B cell (primary cell): ENCODE measurements at regions of chr16 and their contacts with region 1.

Region 1: GRCh38 chr16:50245417-50246298 is 20.7 kb upstream of the ADCY7 start:
- DNase-seq: peak; percentile 57
- ATAC-seq: peak; percentile 94
- H3K4me3 ChIP-seq: peak overlapping the region in 4 of 5 experiments; percentile 60 to 69 (median 62)
- H3K4me3 Mint-ChIP-seq: peak overlapping the region; percentile 74
- H3K27ac ChIP-seq: no peak overlapping the region
- H3K27ac Mint-ChIP-seq: peak overlapping the region; percentile 50
- H3K4me1 ChIP-seq: peaks cover 6 to 15% of the 10 kb centered on the region in 2 donors
- H3K4me1 Mint-ChIP-seq: peaks cover 11% of the 10 kb centered on the region
- H3K27me3 ChIP-seq: peaks cover 0 to 11% (median 4%) of the 10 kb centered on the region in 4 experiments
- H3K27me3 Mint-ChIP-seq: no peaks in the 10 kb centered on the region
- CTCF ChIP-seq: peak; percentile 39

Region 2: GRCh38 chr16:50281964-50282538 is 36.4 kb after region 1 on chr16:
- CTCF ChIA-PET with region 1: interaction called, 10 read pairs
- POLR2A ChIA-PET with region 1: interaction called, 4 read pairs
- intact Hi-C with region 1: loop called (anchors 2 kb)
- DNase-seq: peak; percentile 92
- ATAC-seq: peak; percentile 90
- H3K4me3 ChIP-seq: peak overlapping the region in 4 of 5 experiments; percentile 34 to 54 (median 50)
- H3K4me3 Mint-ChIP-seq: peak overlapping the region; percentile 84
- H3K27ac ChIP-seq: peak overlapping the region; percentile 65 to 93
- H3K27ac Mint-ChIP-seq: peak overlapping the region; percentile 100
- H3K4me1 ChIP-seq: peaks cover 85 to 87% of the 10 kb centered on the region in 2 donors
- H3K4me1 Mint-ChIP-seq: peaks cover 86% of the 10 kb centered on the region
- H3K27me3 ChIP-seq: no peaks in the 10 kb centered on the region
- H3K27me3 Mint-ChIP-seq: no peaks in the 10 kb centered on the region
- CTCF ChIP-seq: no peak